ENCODE measurements at regions of chr2 and their contacts with region 1.

Region 1: DNA sequence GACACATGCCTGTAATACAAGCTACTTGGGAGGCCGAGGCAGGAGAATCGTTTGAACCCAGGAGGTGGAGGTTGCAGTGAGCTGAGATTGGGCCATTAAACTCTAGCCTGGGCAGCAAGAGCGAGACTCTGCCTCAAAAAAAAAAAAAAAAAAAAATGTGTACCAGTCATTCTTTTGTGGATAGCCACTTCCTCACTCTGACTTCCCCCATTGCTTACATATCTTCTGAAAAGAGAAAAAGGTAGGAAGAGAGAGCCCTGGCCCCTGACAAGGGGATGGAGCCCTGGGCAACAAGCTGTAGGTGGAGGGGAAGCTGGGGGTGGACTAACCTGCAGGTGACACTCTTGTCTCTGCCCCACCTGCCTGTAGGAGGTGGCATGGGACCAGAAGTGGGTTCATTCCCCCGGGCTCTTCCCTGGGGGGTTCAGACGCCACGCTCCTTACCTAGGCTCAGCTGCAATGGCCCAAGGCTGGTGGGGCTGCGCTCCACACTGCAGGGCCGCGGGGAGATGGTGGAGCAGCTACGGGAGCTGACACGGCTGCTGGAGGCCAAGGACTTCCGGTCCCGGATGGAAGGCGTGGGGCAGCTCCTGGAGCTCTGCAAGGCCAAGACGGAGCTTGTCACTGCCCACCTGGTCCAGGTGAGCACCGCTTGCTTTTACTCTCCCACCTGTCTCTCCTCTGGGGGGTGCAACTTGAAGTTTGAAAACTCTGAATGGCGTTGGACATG is 39.1 kb downstream of the PCARE start:
- DNase-seq: no peak
- H3K4me3 Mint-ChIP-seq: no peak overlapping the region
- H3K27ac Mint-ChIP-seq: no peak overlapping the region
- H3K4me1 Mint-ChIP-seq: peaks cover 29% of the 10 kb centered on the region
- H3K27me3 Mint-ChIP-seq: no peaks in the 10 kb centered on the region

Region 2: DNA sequence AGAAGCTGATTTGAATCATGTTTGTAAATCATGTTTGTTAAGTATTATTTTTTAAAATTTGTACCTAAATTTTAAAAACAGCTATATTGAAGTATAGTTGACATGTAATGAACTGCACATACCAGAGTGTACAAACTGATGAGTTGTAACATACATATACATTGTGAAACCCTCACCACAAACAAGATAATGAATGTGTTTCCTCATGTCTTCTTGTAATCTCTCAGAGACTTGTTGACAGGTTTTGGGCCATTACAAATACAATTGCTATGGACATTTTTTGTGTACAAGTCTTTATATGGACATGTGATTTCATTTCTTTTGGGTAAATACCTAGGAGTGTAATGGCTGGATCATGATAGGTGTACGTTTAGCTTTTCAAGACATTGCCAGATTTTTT is 119.2 kb before region 1 on chr2:
- CTCF ChIA-PET with region 1: no interaction called
- POLR2A ChIA-PET with region 1: no interaction called
- DNase-seq: no peak
- H3K4me3 Mint-ChIP-seq: no peak overlapping the region
- H3K27ac Mint-ChIP-seq: no peak overlapping the region
- H3K4me1 Mint-ChIP-seq: peaks cover 16% of the 10 kb centered on the region
- H3K27me3 Mint-ChIP-seq: no peaks in the 10 kb centered on the region

Region 3: DNA sequence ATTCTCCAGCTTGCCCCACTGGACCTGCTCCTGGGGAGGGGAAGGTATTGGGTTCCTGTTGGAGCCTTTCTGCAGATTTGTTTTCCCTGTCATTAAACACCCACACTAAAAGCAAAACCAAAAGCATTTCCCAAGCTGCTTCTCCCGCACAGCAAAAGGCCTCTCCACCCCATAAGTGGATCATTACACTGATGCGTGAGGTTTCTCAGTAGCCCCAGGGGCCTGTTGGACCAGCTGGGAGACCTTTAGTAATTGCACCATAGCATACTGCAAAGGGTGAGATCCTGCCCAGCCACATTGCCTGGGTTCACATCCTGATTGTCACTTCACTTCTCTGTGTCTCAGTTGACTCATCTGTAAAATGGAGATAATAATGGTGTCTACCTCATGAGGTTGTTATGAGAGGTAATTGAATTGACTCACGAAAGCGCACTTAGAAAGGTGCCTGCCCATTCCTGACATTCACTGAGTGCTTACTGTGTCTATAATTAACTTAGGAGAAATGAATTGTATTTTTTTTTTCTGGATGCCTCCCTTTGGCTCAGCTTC is 10.2 kb before region 1 on chr2:
- CTCF ChIA-PET with region 1: interaction called, 10 read pairs
- POLR2A ChIA-PET with region 1: no interaction called
- DNase-seq: no peak
- H3K4me3 Mint-ChIP-seq: no peak overlapping the region
- H3K27ac Mint-ChIP-seq: no peak overlapping the region
- H3K4me1 Mint-ChIP-seq: peaks cover 6% of the 10 kb centered on the region
- H3K27me3 Mint-ChIP-seq: no peaks in the 10 kb centered on the region